Naive thymus-derived CD4-positive, alpha-beta T cell (primary cell): ENCODE measurements at regions of chr11 and their contacts with region 1.

Region 1: DNA sequence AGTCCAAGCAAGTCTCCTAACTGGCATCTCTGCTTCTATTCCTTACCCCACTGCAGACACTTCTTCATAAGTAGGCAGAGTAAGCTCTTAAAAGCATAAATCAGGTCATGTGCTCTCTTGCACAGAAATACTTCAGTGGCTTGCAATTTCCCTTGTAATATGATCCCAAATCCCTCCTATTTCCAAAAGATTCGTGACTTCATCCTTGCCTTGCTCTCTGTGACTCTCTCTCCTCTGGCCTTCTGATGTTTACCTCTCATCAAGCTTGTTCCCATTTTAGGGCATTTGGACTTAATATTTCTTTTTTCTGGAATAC is 37.4 kb upstream of the NCR3LG1 start:
- DNase-seq: no peak
- ATAC-seq: no peak
- H3K4me3 ChIP-seq: no peak overlapping the region
- H3K4me3 Mint-ChIP-seq: no peak overlapping the region
- H3K27ac ChIP-seq: no peak overlapping the region
- H3K27ac Mint-ChIP-seq: no peak overlapping the region
- H3K4me1 ChIP-seq: no peaks in the 10 kb centered on the region
- H3K4me1 Mint-ChIP-seq: no peaks in the 10 kb centered on the region
- H3K27me3 ChIP-seq: no peaks in the 10 kb centered on the region
- H3K27me3 Mint-ChIP-seq: no peaks in the 10 kb centered on the region

Region 2: DNA sequence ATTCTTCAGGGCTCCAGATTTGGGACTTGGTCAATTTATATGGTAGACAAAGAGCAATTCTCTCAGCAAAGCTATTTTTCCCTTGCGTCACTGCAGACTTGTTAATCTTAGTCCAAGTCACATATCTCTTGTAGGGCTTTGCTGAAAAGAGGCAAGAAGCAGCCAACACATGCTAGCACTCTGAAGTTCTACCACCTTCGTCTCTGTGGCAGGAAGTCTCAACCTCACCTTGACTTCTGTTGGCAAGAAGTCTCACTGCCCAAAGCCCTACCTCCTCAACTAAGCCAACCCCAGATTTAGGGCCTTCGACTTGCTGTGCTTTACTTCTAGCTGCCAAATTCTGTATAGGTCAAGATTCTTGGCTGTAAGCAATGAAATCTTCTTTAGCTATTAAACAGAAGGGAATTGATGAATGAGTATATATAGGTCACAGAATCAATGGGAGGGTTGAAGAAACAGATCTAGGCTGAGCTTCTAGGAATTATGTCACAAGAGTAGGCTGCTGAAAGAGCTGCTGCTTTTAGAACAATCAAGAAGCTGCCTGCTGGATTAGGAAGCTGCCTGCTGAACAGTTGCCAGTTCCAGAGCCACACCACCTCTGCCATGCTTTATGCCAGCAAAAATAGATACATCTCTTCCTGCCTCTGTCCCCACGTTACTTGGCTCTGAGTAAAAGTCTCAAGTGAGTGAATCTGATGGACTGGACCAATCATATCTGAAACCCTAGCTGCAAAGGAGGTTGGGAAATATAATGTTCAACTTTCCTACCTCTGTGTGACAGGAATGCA is 19.8 kb after region 1 on chr11:
- CTCF ChIA-PET with region 1: no interaction called
- POLR2A ChIA-PET with region 1: interaction called, 4 read pairs
- intact Hi-C with region 1: loop called in 1 of 2 experiments (anchors 2 kb)
- DNase-seq: peak in 6 of 9 donors; percentile 2 to 39 (median 29)
- ATAC-seq: peak; percentile 70
- H3K4me3 ChIP-seq: no peak overlapping the region
- H3K4me3 Mint-ChIP-seq: peak overlapping the region in 1 of 10 donors; percentile 2
- H3K27ac ChIP-seq: peak overlapping the region; percentile 26
- H3K27ac Mint-ChIP-seq: peak overlapping the region in 8 of 9 donors; percentile 14 to 83 (median 64)
- H3K4me1 ChIP-seq: peaks cover 14% of the 10 kb centered on the region in 2 donors
- H3K4me1 Mint-ChIP-seq: peaks cover 0 to 24% (median 19%) of the 10 kb centered on the region in 7 donors
- H3K27me3 ChIP-seq: no peaks in the 10 kb centered on the region
- H3K27me3 Mint-ChIP-seq: no peaks in the 10 kb centered on the region